Caco-2 (cell line): ENCODE measurements at regions of chr1 and their contacts with region 1.

Region 1: DNA sequence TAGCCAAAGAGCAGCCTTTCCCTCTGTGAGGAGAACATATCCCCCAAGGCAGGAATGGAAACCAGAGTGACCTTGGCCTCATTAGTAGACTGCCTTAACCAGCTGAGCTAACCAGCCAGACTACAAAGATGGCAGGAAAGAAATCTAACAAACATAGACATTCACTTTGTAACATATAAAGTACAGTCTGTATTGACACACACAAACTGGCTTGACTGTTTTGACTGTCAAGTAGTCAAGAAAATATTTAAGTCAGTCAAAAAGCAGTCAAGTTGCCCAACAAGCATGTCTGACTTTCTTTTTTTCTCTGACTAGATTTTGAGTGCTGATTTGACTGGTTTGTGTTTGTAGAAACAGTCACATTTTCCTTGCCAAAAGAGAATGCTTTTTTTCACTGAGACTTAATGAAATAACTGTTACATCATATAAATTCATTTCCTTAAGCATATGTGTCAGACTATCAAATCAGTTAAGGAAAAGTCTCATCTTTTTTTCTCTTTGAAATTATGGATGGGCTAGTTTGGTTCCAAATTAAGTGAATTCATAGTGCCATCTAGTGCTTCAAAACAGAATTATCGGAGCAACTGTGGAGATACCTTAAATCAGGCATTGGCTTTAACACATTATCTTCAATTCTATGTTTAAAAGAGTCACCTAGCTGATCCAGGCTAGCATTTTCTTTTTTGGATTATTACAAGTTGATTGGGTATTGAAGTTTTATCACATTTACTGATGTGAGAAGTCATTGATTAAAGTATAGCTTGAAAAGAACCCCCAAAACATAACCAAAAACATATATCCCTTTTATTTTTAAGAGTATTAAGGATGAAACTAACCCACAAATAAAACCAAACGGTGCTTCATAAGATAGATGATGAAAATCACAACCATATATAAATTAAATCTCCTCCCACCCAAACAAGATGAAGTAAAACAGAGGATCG is 75.0 kb downstream of the ATP6V1G3 start:
- DNase-seq: peak in 1 of 2 experiments; percentile 50
- H3K4me3 ChIP-seq: no peak overlapping the region
- H3K4me3 Mint-ChIP-seq: no peak overlapping the region
- H3K27ac Mint-ChIP-seq: no peak overlapping the region
- H3K4me1 ChIP-seq: no peaks in the 10 kb centered on the region
- H3K4me1 Mint-ChIP-seq: no peaks in the 10 kb centered on the region
- H3K27me3 ChIP-seq: no peaks in the 10 kb centered on the region
- H3K27me3 Mint-ChIP-seq: peaks cover 2% of the 10 kb centered on the region
- CTCF ChIP-seq: peak; percentile 53 to 58

Region 2: GRCh38 chr1:197521118-197521739 is 944.2 kb before region 1 on chr1:
- CTCF ChIA-PET with region 1: no interaction called
- POLR2A ChIA-PET with region 1: no interaction called
- intact Hi-C with region 1: loop called (anchors 1 kb)
- DNase-seq: peak in 1 of 2 experiments; percentile 47
- H3K4me3 ChIP-seq: no peak overlapping the region
- H3K4me3 Mint-ChIP-seq: no peak overlapping the region
- H3K27ac Mint-ChIP-seq: no peak overlapping the region
- H3K4me1 ChIP-seq: no peaks in the 10 kb centered on the region
- H3K4me1 Mint-ChIP-seq: no peaks in the 10 kb centered on the region
- H3K27me3 ChIP-seq: no peaks in the 10 kb centered on the region
- H3K27me3 Mint-ChIP-seq: no peaks in the 10 kb centered on the region
- CTCF ChIP-seq: peak; percentile 64 to 70

Region 3: DNA sequence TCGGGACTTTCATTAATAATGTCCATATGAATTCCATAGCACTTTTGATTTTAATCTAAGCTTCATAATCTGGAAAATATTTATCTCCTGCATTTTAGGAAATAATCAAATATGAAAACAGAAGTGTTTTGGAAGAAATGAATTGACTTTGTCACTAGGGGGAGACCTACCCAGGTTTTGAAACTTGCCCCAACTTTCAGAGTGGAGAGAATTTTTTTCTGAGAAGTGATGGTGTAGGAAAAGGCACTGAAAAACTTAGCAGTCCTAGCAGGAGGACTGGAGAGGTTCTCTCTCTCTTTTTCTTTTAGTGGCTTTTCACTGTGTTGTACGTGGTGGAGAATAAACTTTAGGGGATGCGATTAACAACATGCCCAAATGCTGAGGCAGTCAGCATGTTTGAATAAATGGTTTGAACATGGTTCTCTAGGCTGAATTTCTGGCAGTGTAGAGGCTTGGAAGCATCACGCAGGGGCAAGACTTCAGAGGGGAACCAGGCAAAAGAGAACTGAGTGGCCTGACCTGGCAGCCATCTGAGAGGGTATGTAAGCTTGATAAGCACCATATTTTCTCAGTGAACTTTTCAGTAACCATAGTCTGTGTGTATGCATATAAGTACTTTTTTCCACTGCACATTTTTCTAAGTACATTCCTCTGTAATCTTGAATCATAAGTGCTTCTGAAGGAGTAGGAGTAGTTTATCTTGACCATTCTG is 377.0 kb before region 1 on chr1:
- CTCF ChIA-PET with region 1: no interaction called
- POLR2A ChIA-PET with region 1: no interaction called
- intact Hi-C with region 1: loop called (anchors 1 kb)
- DNase-seq: peak in 1 of 2 experiments; percentile 50
- H3K4me3 ChIP-seq: no peak overlapping the region
- H3K4me3 Mint-ChIP-seq: peak overlapping the region; percentile 52
- H3K27ac Mint-ChIP-seq: no peak overlapping the region
- H3K4me1 ChIP-seq: peaks cover 6% of the 10 kb centered on the region; the same call in 1 of the 2 replicates
- H3K4me1 Mint-ChIP-seq: peaks cover 12% of the 10 kb centered on the region
- H3K27me3 ChIP-seq: no peaks in the 10 kb centered on the region
- H3K27me3 Mint-ChIP-seq: no peaks in the 10 kb centered on the region
- CTCF ChIP-seq: peak; percentile 67 to 70

Region 4: DNA sequence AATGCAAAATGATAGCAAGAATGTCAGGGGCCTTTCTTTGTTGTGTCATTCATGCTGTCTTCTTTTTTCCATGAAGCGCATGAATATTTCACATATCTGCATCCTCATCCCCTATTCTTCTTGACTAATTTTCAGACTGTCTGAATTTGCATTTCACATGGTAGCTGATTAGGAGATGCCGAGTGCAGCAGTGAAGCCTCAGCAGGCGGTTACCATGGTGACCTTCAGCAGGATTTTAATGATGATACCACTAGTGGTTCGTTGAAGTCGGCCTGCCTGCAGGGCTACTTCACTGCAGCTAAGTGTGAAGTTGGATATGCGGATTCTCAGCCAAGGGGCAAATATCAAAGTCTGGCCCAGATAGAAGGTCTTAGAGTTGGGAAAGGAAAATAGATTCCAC is 166.8 kb before region 1 on chr1:
- CTCF ChIA-PET with region 1: no interaction called
- POLR2A ChIA-PET with region 1: no interaction called
- intact Hi-C with region 1: loop called (anchors 10 kb)
- DNase-seq: no peak
- H3K4me3 ChIP-seq: no peak overlapping the region
- H3K4me3 Mint-ChIP-seq: no peak overlapping the region
- H3K27ac Mint-ChIP-seq: no peak overlapping the region
- H3K4me1 ChIP-seq: no peaks in the 10 kb centered on the region
- H3K4me1 Mint-ChIP-seq: no peaks in the 10 kb centered on the region
- H3K27me3 ChIP-seq: no peaks in the 10 kb centered on the region
- H3K27me3 Mint-ChIP-seq: no peaks in the 10 kb centered on the region
- CTCF ChIP-seq: no peak

Region 5: DNA sequence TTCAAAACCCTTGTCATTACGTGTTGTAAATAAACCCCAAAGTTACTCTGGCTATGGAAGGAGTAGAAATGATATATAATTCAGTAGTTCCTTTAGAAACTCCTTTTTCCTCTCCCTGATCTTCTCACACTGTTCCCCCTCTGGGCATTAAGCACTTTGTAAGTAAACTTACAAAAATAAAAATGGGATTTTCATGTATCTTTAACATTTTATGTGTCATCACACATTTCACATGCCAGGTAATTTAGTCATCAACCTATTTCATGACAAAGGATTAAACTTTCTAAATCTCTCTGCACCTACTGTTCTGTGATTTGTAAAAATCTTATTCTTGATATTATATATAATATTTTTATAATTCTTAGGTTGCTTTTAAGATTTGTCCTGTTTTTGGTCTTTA is 131.7 kb before region 1 on chr1:
- CTCF ChIA-PET with region 1: no interaction called
- POLR2A ChIA-PET with region 1: no interaction called
- intact Hi-C with region 1: no loop called
- DNase-seq: no peak
- H3K4me3 ChIP-seq: no peak overlapping the region
- H3K4me3 Mint-ChIP-seq: no peak overlapping the region
- H3K27ac Mint-ChIP-seq: no peak overlapping the region
- H3K4me1 ChIP-seq: no peaks in the 10 kb centered on the region
- H3K4me1 Mint-ChIP-seq: no peaks in the 10 kb centered on the region
- H3K27me3 ChIP-seq: no peaks in the 10 kb centered on the region
- H3K27me3 Mint-ChIP-seq: peaks cover 5% of the 10 kb centered on the region
- CTCF ChIP-seq: no peak